HEK293 (cell line): ENCODE measurements at regions of chr7 and their contacts with region 1.

Region 1: DNA sequence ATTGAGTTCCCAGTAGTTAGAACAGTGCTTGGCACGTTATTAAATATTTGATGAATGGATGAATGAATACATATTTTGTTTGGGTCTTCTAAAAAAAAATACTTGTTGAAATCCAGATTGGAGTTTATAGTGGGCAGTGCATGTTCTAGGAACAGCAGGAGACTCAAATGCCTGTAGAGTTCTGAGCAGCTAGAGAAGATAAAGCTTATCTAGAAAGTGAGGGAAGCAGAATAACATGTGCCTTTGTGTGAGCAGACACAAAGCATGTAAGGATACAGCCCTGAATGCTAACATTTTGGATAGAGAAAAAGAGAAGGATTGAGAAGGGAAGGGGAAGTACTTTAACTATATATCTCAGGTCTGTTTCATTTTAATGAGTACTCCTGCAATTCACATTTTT is 71.9 kb downstream of the SRI start:
- H3K4me3 ChIP-seq: no peak overlapping the region
- H3K27ac ChIP-seq: no peak overlapping the region
- H3K4me1 ChIP-seq: no peaks in the 10 kb centered on the region
- CTCF ChIP-seq: no peak

Region 2: DNA sequence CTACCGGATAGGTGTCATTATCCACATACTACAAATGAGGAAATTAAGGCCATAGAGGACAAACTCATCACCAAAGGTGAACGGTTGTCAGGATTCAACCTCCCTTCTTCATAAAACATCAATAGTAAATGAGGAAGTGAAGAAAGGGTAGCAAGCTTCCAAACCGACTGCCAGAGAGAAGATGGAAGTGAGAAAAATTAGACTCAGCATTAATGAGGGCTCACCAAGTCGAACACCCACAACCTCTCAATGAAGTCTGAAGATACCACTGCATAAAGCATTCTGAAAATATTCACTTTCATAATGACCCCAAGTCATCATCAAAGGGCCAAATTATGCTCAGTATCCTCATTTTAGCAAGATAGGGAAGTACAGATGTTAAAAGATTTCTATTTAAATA is 702.1 kb before region 1 on chr7:
- CTCF ChIA-PET with region 1: no interaction called
- POLR2A ChIA-PET with region 1: no interaction called
- H3K4me3 ChIP-seq: no peak overlapping the region
- H3K27ac ChIP-seq: no peak overlapping the region
- H3K4me1 ChIP-seq: no peaks in the 10 kb centered on the region
- CTCF ChIP-seq: no peak

Region 3: DNA sequence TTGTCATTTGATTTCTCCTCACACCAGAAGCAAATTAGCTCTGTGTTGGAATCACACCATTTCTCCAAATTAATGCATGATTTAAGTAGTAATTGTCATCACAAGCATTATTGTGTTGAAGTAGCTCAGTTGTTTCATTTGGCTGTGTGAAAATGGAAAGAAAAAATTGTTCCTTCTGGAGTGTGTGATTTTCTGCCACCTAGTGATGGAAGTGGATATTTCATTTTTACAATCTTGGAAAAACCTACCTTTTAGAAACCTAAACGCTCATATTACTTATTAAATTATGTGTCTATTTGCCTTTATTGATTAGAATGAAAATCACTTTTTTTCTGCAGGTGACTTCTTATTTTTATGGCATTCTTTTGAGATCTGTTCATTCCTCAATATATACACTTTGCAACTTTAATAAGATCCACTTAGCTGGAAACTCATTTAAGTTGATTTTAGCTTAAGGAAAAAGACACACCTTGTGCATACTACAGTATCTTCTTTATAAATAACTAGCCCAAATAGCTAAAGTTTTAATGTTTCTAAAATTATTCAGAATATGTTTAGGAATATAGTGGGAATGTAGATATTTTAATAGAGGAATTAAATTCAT is 21.9 kb after region 1 on chr7:
- CTCF ChIA-PET with region 1: interaction called, 10 read pairs
- POLR2A ChIA-PET with region 1: no interaction called
- H3K4me3 ChIP-seq: no peak overlapping the region
- H3K27ac ChIP-seq: no peak overlapping the region
- H3K4me1 ChIP-seq: no peaks in the 10 kb centered on the region
- CTCF ChIP-seq: no peak

Region 4: DNA sequence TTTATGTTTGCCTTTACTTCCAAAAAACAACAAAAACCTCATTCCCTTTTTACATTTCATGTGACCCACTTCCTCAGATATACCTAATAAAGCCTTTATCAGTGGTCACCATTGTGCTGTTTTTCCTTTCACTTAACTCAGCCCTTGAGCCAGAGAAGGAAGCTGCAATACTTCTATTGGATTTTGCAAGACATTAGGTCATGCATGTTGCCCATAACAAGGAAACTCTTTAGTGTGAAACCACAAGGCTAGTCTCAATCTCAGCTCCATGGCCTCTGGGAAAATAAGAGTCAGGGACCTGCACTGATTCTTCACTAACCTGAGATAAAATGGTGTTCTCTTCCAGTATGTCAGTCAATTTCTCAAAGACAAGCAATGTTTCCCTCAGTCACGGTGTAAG is 130.9 kb after region 1 on chr7:
- CTCF ChIA-PET with region 1: no interaction called
- POLR2A ChIA-PET with region 1: no interaction called
- H3K4me3 ChIP-seq: no peak overlapping the region
- H3K27ac ChIP-seq: no peak overlapping the region
- H3K4me1 ChIP-seq: no peaks in the 10 kb centered on the region
- CTCF ChIP-seq: no peak